ENCODE measurements at regions of chr20 and their contacts with region 1.

Region 1: DNA sequence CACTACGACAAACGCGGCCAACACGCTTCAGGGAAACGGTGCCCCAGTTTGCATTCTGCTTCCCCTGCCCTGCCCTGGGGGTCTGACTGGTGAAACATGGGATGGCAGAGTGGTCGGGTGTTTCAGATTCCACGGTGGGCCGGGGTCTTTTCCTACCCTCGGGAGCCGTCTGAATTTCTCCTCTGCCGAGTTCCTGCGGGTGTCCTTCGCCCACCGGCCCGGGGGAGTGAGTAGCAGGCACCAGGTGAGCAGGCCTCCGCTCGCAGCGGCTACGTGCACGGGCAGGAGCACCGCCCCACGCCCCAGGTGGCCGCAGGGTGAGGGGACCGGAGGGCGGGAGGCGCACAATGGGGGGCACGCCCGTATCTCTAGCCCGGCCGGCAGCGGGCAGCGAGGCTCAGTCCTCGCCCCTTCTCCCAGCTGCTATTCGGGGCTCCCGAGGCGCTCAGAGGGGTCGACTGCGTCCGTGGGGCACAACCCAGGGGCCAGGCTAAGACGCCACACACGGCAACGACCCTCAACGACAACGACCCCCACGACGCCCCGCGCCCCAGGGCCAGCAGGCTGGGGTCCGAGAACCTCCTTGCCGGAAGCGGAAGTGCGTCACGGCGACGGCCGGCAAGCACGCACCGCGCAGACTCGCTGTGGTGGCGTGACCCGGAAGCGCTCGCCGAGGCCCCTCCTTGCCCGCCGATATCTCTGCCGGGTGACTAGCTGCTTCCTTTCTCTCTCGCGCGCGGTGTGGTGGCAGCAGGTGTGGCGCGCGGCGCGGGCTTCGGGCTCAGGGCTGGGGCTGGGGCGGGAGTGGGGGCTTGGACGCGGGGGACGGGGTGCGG is at the start of gene RPS21:
- DNase-seq: peak; percentile 98
- H3K4me3 ChIP-seq: peak within 1 kb of the TSS; percentile 89 to 99 (median 95)
- H3K27ac ChIP-seq: peak within 1 kb of the TSS; percentile 82 to 99 (median 96)
- H3K4me1 ChIP-seq: peaks cover 31 to 69% (median 40%) of the 10 kb centered on the region in 6 donors
- H3K27me3 ChIP-seq: no peaks in the 10 kb centered on the region
- CTCF ChIP-seq: peak in 4 of 11 experiments; percentile 22 to 42 (median 38)
- POLR2A ChIP-seq: peak in 1 of 3 donors; percentile 45
- total RNA-seq, gene RPS21: 1,168 to 3,909 (median 1,666) TPM

Region 2: DNA sequence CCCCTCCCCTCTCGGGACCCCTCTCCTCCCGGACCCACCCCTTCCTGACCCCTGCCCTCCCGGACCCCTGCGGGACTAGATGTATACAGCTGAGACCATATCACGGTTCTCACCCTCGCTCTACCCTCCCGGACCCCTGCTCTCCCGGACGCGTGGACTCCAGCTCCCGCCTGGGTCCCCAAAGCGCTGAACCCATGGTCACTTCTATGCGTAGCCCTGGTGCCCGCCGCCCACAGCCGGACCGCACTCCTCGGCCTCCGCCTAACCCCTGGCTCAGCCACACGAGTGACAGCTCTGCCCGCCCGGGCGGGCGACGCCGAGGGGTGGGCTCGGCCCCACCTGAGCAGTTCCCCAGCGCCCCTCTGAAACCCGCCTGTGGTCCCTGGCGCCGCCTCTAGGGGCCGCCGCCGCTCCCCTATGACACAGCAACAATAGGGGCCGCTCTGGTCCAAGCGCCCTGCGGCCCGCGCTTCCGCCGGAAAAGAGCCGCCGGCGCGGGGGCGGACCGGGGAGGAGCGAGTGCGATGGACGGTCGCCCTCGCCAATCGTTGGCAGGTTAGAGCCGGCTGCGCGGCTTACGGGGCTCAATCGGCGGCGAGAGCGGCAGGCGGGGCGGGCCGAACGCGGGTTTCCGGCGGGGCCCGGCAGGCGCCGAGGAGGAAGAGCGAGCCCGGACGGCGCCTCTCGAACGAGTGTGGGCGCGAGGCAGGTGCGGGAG is 84.1 kb before region 1 on chr20 and contains the start of gene ADRM1:
- intact Hi-C with region 1: loop called (anchors 5 kb)
- DNase-seq: peak; percentile 98
- H3K4me3 ChIP-seq: peak within 1 kb of the TSS; percentile 55 to 100 (median 96)
- H3K27ac ChIP-seq: peak within 1 kb of the TSS; percentile 88 to 98 (median 96)
- H3K4me1 ChIP-seq: peaks cover 23 to 85% (median 53%) of the 10 kb centered on the region in 6 donors
- H3K27me3 ChIP-seq: no peaks in the 10 kb centered on the region
- CTCF ChIP-seq: peak; percentile 95 to 99 (median 98)
- POLR2A ChIP-seq: peak in 1 of 3 donors; percentile 81
- total RNA-seq, gene ADRM1: 67.1 to 112 (median 82.3) TPM

Measured in spleen (tissue), 13 donors.